Spleen (tissue), 13 donors: ENCODE measurements at regions of chr6 and their contacts with region 1.

Region 1: GRCh38 chr6:37171970-37172812 is 2.2 kb downstream of the PIM1 start:
- DNase-seq: peak; percentile 92
- H3K4me3 ChIP-seq: peak overlapping the region; percentile 78 to 98 (median 92)
- H3K27ac ChIP-seq: peak overlapping the region; percentile 58 to 96 (median 92)
- H3K4me1 ChIP-seq: peaks cover 44 to 90% (median 84%) of the 10 kb centered on the region in 6 donors
- H3K27me3 ChIP-seq: peaks cover 0 to 9% (median 0%) of the 10 kb centered on the region in 7 donors
- CTCF ChIP-seq: peak; percentile 75 to 99 (median 97)
- POLR2A ChIP-seq: no peak

Region 2: DNA sequence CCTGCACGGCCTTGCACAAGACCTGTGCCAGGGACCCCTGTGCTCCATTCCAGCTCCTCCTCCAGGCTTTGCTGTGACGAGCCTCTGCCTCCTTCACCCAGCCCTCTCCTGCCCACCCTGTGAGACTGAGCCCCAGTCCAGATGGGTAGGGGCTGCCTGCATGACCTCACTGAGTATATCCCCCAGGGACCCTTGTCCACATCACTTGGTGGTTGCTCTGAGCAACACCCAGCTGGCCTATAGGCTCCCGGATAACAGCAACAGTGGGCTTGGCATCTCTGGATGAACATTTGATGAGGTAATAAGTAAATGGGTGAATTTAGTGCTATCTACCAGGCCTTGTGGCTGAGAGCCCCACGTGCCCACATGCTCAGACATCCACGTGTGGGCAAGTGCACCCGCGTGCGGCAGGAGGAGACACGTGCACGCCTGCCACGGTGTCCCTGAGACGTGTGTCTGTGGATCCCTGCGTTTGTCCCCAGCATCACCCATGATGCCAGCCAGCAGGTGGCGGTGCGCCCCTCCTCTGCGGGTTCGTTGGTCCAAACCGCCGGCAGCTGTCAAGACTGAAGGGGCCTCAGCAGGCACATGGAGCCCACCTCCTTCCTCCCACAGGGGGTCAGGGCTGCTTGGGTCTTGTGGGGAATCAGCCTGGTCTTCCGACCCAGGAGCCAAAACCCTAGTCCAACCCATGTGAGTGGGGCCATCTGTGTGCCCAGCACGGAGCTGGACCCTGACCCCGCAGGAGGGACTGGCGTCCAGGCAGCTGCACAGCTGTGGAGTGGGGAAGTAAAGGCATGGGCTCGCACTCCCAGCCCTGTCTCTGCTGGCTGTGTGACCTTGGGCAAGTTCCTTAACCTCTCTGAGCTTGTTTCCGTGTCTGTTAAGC is 120.8 kb before region 1 on chr6:
- intact Hi-C with region 1: loop called (anchors 2 kb)
- DNase-seq: peak; percentile 99
- H3K4me3 ChIP-seq: peak overlapping the region in 3 of 8 donors; percentile 10 to 54 (median 24)
- H3K27ac ChIP-seq: peak overlapping the region; percentile 73 to 94 (median 85)
- H3K4me1 ChIP-seq: peaks cover 33 to 71% (median 54%) of the 10 kb centered on the region in 6 donors
- H3K27me3 ChIP-seq: no peaks in the 10 kb centered on the region
- CTCF ChIP-seq: peak; percentile 91 to 98 (median 97)
- POLR2A ChIP-seq: no peak